ENCODE measurements at regions of chr6 and their contacts with region 1.

Region 1: GRCh38 chr6:51949468-51949867 is 137.9 kb downstream of the PKHD1 start:
- DNase-seq: no peak
- ATAC-seq: no peak
- H3K4me3 Mint-ChIP-seq: no peak overlapping the region
- H3K27ac Mint-ChIP-seq: no peak overlapping the region
- H3K4me1 Mint-ChIP-seq: peaks cover 2% of the 10 kb centered on the region
- H3K27me3 Mint-ChIP-seq: no peaks in the 10 kb centered on the region
- CTCF ChIP-seq: no peak

Region 2: GRCh38 chr6:51562198-51562597 is 387.3 kb before region 1 on chr6:
- CTCF ChIA-PET with region 1: no interaction called
- POLR2A ChIA-PET with region 1: interaction called, 13 read pairs
- DNase-seq: no peak
- ATAC-seq: no peak
- H3K4me3 Mint-ChIP-seq: no peak overlapping the region; the same call in 1 of the 2 replicates
- H3K27ac Mint-ChIP-seq: no peak overlapping the region; the same call in 1 of the 2 replicates
- H3K4me1 Mint-ChIP-seq: peaks cover 34% of the 10 kb centered on the region
- H3K27me3 Mint-ChIP-seq: no peaks in the 10 kb centered on the region
- CTCF ChIP-seq: no peak

Measured in WTC11 (cell line).